Activated naive CD8-positive, alpha-beta T cell treated with anti-CD3 and anti-CD28 coated beads, Interleukin-2, amount 10 ng/mL, durations not matched to agents 7 days and 5 days (primary cell): ENCODE measurements at regions of chr11 and their contacts with region 1.

Region 1: DNA sequence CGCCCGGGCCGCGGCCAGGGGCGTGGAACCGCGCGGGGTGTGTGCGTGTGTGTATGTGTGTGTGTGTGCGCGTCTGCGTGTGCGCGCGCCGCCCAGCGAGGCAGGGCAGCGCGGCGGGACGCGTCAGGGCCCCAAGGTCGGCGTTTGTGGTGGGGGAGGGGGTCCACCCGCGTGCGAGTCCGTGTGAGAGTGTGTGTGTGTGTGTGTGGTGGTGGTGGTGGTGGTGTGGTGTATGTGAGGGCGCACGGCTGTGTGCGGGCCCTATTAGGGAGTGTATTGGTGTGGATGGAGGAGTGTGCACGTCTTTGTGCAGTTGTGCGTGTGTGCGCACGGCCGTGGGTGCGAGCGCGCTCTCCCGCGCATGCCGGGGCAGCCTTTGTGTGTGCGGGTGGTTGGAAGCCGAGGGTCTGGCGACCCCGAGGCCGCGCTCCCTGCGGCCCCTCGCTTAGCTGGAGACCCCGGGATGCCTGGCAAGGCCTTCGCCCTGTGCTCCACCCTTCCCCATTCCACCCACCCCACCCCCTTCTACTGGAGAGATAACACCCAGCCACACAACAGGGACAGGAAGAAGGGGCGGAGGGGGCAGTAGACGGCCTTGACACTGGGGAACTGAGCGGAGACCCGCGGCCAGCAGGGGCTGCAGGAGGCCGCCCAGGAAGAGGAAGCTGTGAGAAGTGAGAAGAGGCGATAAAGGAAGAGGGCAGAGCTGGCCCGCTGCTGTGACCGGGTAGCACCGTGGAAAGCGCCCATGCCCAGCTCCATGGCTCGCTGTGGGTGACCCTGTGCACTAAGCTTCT is 528 bp upstream of the ARRB1 start:
- DNase-seq: peak; percentile 78
- ATAC-seq: peak; percentile 68
- H3K4me3 Mint-ChIP-seq: peak overlapping the region; percentile 96
- H3K27ac Mint-ChIP-seq: peak overlapping the region; percentile 98
- H3K4me1 Mint-ChIP-seq: peaks cover 52% of the 10 kb centered on the region
- H3K27me3 Mint-ChIP-seq: no peaks in the 10 kb centered on the region

Region 2: GRCh38 chr11:75384438-75385080 is 32.6 kb after region 1 on chr11:
- POLR2A ChIA-PET with region 1: interaction called, 12 read pairs
- DNase-seq: peak; percentile 89
- ATAC-seq: peak; percentile 75
- H3K4me3 Mint-ChIP-seq: peak overlapping the region; percentile 66
- H3K27ac Mint-ChIP-seq: peak overlapping the region; percentile 90
- H3K4me1 Mint-ChIP-seq: peaks cover 22% of the 10 kb centered on the region
- H3K27me3 Mint-ChIP-seq: peaks cover 9% of the 10 kb centered on the region